ENCODE measurements at regions of chr6 and their contacts with region 1.

Region 1: DNA sequence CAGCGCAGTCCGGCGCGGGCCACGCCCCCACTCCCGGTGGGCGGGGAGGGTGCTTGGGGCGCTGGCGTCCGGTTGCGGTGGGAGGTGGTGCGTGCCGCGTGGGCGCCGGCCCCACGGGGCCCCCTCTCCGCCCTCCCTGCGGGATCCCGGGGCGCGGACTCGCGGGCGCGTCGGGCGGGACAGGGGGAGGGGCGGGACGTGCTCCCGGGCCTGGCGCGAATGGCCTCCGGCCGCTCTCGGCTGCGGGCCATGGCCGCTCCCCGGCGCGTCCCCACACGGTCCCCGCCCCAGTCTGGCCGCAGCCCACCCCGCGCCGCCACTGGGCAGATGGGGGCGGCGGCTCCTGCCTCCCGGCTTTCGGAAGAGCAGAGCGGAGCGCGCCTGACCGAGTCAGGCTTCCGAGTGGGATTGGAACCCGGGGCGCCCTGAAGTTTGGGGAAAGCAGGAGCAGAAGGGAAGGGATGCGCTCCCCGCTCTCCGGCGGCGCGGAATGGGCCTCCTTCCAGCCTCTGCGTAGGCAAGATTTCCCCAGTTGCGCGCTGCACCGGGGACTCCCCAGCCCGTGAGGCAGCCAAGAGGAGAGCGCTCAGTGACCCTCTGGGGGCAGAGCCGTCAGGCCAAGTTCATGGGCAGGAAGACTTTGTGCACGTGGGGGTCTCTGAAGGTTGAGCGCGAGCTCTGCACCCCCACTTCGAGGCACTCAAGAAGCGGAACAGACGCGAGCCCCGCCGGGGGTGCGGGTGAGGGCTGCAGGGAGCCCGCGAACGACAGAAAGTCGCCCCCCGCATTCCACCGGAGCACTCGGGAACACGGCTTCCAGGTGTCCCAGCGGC is 565 bp upstream of the PPP1R3G start:
- DNase-seq: peak in 1 of 2 experiments; percentile 41
- H3K4me3 ChIP-seq: peak overlapping the region; percentile 76
- H3K27ac ChIP-seq: no peak overlapping the region
- H3K4me1 ChIP-seq: peaks cover 16% of the 10 kb centered on the region
- H3K27me3 ChIP-seq: no peaks in the 10 kb centered on the region
- CTCF ChIP-seq: no peak

Region 2: GRCh38 chr6:4256965-4257364 is 827.6 kb before region 1 on chr6:
- CTCF ChIA-PET with region 1: no interaction called
- POLR2A ChIA-PET with region 1: interaction called, 12 read pairs
- intact Hi-C with region 1: no loop called
- DNase-seq: peak in 1 of 2 experiments; percentile 31
- H3K4me3 ChIP-seq: no peak overlapping the region
- H3K27ac ChIP-seq: no peak overlapping the region
- H3K4me1 ChIP-seq: no peaks in the 10 kb centered on the region
- H3K27me3 ChIP-seq: no peaks in the 10 kb centered on the region
- CTCF ChIP-seq: no peak

Region 3: DNA sequence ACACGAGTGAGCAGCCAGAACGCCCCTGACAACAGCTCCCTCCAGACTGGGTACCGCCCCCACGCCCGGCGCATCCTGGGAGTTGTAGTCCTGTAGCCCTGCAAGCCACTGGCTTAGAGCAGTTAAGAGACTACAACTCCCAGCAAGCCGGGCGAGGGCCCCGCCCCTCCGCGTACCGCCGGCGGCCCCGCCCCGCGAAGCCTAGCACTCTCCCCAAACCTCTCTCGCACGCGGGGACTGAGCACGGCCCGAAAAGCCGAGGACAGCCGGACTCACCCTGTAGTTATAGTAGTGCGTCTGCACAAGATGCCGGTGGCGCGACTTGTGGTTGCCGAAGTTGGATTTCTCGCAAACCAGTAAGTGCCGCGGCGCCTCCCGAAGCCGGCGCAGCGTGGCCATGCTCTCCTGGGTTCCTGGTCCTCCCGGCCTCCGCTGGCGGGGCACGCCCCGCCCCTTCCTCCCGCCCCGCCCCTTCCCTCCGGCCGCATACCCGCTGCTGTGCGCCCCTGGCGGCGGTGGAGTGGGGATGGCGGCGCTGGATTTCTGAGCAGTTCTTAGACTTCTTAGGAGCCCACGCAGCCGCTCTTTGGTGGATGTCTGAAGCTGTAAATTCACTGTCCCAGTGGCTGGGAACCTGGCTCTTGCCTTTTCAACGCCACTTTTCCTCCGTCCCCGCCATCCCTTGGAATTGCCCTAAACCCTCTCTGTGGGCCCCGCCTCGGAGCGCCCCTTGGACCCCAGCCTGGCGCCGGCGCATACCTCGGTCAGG is 80.8 kb before region 1 on chr6 and contains the start of gene RPP40:
- CTCF ChIA-PET with region 1: no interaction called
- POLR2A ChIA-PET with region 1: no interaction called
- intact Hi-C with region 1: loop called (anchors 2 kb)
- DNase-seq: peak; percentile 87 to 98
- H3K4me3 ChIP-seq: peak within 1 kb of the TSS; percentile 71
- H3K27ac ChIP-seq: peak within 1 kb of the TSS; percentile 76
- H3K4me1 ChIP-seq: no peaks in the 10 kb centered on the region
- H3K27me3 ChIP-seq: no peaks in the 10 kb centered on the region
- CTCF ChIP-seq: peak; percentile 77
- total RNA-seq, gene RPP40: 16.0 and 21.0 TPM in 2 replicates

Region 4: GRCh38 chr6:5058254-5058653 is 26.3 kb before region 1 on chr6:
- CTCF ChIA-PET with region 1: interaction called, 16 read pairs
- POLR2A ChIA-PET with region 1: no interaction called
- intact Hi-C with region 1: no loop called
- DNase-seq: no peak
- H3K4me3 ChIP-seq: no peak overlapping the region
- H3K27ac ChIP-seq: no peak overlapping the region
- H3K4me1 ChIP-seq: no peaks in the 10 kb centered on the region
- H3K27me3 ChIP-seq: no peaks in the 10 kb centered on the region
- CTCF ChIP-seq: no peak

Region 5: GRCh38 chr6:5135788-5136376 is 51.3 kb after region 1 on chr6:
- CTCF ChIA-PET with region 1: interaction called, 10 read pairs
- POLR2A ChIA-PET with region 1: no interaction called
- intact Hi-C with region 1: no loop called
- DNase-seq: no peak
- H3K4me3 ChIP-seq: no peak overlapping the region
- H3K27ac ChIP-seq: no peak overlapping the region
- H3K4me1 ChIP-seq: no peaks in the 10 kb centered on the region
- H3K27me3 ChIP-seq: no peaks in the 10 kb centered on the region
- CTCF ChIP-seq: peak; percentile 67